ENCODE measurements at regions of chr15 and their contacts with region 1.

Region 1: DNA sequence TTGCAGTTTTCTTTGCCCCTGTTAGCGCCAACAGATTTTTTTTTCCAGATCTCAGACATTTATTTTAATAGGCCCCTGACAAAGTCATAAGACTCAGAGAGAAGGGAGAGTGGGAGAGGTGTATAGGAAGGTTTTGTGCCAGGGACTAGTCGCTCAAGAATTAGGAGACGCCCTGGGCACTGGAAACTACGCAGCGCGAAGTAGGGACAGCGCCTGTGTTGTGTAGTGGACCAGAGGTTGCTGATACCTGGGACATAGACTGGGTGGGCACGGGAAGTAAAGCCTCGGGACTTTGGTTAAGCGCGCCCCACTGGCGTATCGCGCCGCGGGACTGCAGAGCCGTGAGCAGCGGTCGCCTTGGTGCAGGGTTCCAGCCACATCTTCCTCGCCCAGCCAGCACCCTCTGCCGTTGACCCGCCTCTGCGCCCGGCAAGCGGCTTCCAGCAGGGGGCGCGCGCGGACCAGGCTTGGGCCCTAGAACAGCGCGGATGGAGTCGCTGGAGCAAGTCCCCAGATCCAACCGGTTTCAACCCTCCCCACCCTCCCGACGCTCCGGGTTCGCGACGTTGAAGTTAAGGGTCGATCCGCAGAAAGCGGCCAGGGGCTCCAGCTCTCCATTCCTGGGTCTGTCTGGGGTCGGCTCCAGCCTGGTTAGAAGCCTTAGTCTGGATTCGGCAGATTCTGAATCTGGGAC is 3.0 kb upstream of the ISLR2 start:
- DNase-seq: peak; percentile 84 to 90
- H3K4me3 ChIP-seq: peak overlapping the region; percentile 31 to 66 (median 45)
- H3K27ac ChIP-seq: peak overlapping the region in 1 of 2 donors; percentile 33
- H3K4me1 ChIP-seq: peaks cover 7 to 16% of the 10 kb centered on the region in 2 donors
- H3K27me3 ChIP-seq: peaks cover 3 to 49% of the 10 kb centered on the region in 2 donors
- CTCF ChIP-seq: peak; percentile 93 to 94 (median 93)
- POLR2A ChIP-seq: no peak

Region 2: DNA sequence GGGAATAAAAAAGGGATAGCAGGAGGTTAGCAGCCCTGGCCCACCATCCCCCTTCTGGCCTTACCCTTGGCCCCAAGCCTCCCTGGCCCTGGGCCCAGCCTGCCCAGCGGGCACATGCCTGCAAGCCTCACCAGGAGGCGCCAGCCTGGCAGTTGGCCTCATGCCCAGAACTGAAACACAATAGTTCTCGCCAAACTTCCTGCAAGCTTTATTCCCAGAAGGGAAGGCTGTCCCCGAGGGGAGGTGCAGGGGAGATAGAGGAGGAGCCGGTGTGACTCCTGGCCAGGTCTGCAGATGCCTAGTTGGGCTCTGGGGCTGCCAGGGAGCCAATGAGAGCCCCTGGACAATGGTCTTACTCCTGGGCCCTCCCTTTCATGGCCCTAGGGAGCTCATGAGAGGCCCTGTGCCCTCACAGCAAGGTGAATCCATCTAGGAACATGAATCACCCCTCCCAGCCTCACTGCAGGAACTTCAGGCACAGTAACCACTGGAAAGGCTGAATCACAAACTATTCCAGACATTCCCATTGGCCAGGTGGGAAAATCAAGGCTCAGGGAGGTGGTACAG is 112.7 kb after region 1 on chr15:
- intact Hi-C with region 1: loop called (anchors 5 kb)
- DNase-seq: peak; percentile 31 to 71
- H3K4me3 ChIP-seq: no peak overlapping the region
- H3K27ac ChIP-seq: no peak overlapping the region
- H3K4me1 ChIP-seq: peaks cover 0 to 8% of the 10 kb centered on the region in 2 donors
- H3K27me3 ChIP-seq: no peaks in the 10 kb centered on the region
- CTCF ChIP-seq: peak in 1 of 3 donors; percentile 21
- POLR2A ChIP-seq: no peak

Region 3: DNA sequence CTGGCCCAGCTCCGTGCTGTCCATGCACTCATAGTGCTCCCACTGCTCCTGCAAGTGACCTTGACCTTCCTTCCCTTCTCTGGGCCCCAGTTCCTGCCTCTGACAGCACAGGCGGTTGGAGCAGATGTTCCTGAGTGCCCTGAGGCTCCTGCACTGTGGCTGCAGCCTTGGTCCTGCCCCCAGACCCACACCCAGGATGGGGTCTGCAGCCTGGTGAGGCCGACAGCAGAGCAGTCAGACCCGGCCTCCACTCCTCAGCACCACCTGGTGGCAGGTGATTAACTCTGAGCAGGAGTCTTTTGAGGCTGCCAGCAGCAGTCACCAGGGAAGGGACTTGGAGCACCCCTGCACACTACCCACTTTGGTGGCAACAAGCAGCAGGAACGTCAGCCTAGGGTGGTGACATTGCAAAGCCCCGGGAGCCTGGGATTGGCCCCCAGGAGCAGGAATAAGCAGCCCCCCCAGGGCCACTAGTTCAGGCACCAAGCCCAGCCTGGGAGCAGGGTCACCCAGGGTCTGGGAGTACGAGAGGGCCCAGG is 175.5 kb after region 1 on chr15:
- intact Hi-C with region 1: loop called (anchors 5 kb)
- DNase-seq: no peak
- H3K4me3 ChIP-seq: no peak overlapping the region
- H3K27ac ChIP-seq: no peak overlapping the region
- H3K4me1 ChIP-seq: no peaks in the 10 kb centered on the region
- H3K27me3 ChIP-seq: peaks cover 0 to 3% of the 10 kb centered on the region in 2 donors
- CTCF ChIP-seq: peak in 2 of 3 donors; percentile 42 to 54
- POLR2A ChIP-seq: no peak

Measured in breast epithelium (tissue), 4 donors.